ENCODE measurements at regions of chr14 and their contacts with region 1.

Region 1: DNA sequence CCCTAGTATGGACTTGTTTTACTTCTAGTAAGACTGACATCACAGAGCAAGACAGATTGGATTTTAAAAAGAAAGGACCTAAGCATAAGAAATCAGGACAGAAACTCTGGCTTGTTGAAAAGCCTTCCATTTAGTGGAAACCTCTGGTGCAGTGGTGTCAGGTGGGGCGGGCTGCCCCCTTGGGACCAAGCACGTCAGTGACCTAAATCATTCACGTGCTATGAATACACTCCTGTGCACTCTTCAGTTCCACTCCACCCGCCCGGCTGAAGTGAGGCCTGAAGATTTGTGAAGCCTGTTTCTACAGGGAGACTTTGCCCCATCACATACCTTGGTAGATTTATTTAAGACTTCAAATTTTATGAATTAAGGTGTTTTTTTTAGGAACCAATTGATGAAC is 58.2 kb upstream of the STRN3 start:
- DNase-seq: no peak
- ATAC-seq: no peak
- H3K4me3 Mint-ChIP-seq: no peak overlapping the region
- H3K27ac Mint-ChIP-seq: no peak overlapping the region
- H3K4me1 Mint-ChIP-seq: no peaks in the 10 kb centered on the region
- H3K27me3 Mint-ChIP-seq: no peaks in the 10 kb centered on the region

Region 2: GRCh38 chr14:30656190-30656632 is 428.2 kb before region 1 on chr14:
- CTCF ChIA-PET with region 1: no interaction called
- POLR2A ChIA-PET with region 1: no interaction called
- intact Hi-C with region 1: loop called in 1 of 2 experiments (anchors 2 kb)
- DNase-seq: peak; percentile 44
- ATAC-seq: no peak
- H3K4me3 Mint-ChIP-seq: no peak overlapping the region
- H3K27ac Mint-ChIP-seq: no peak overlapping the region
- H3K4me1 Mint-ChIP-seq: no peaks in the 10 kb centered on the region
- H3K27me3 Mint-ChIP-seq: no peaks in the 10 kb centered on the region

Region 3: DNA sequence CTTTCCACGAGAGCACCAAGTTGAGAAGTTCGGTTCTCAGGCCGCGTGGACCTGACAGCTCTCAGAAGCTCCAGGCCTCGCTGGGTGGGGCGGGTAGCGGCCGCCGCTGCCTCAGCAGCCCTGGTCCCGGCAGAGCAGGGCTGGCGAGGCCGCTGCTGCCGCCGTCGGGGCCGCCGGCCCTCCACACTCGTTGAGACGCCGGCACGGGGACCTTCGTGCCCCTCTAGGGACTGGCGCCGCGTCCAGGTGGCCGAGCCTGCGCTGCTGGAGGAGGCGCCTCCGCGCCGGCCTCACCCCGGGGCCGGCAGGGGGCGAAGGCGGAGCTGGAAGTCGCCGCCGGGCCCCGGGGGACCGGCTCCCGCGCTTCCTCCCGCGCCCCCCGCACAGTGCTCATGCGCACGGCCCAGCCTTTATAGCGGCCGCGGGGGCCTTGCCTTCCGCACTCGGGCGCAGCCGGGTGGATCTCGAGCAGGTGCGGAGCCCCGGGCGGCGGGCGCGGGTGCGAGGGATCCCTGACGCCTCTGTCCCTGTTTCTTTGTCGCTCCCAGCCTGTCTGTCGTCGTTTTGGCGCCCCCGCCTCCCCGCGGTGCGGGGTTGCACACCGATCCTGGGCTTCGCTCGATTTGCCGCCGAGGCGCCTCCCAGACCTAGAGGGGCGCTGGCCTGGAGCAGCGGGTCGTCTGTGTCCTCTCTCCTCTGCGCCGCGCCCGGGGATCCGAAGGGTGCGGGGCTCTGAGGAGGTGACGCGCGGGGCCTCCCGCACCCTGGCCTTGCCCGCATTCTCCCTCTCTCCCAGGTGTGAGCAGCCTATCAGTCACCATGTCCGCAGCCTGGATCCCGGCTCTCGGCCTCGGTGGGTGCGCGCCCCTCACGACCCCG is 210.0 kb before region 1 on chr14 and contains the start of gene COCH:
- CTCF ChIA-PET with region 1: interaction called, 4 read pairs
- POLR2A ChIA-PET with region 1: no interaction called
- intact Hi-C with region 1: loop called in 1 of 2 experiments (anchors 1 kb)
- DNase-seq: peak; percentile 51
- ATAC-seq: peak; percentile 70
- H3K4me3 Mint-ChIP-seq: peak within 1 kb of the TSS; percentile 66
- H3K27ac Mint-ChIP-seq: no peak within 1 kb of the TSS
- H3K4me1 Mint-ChIP-seq: peaks cover 11% of the 10 kb centered on the region
- H3K27me3 Mint-ChIP-seq: peaks cover 42% of the 10 kb centered on the region
- total RNA-seq, gene COCH: 0.94 to 1.1 TPM

Region 4: DNA sequence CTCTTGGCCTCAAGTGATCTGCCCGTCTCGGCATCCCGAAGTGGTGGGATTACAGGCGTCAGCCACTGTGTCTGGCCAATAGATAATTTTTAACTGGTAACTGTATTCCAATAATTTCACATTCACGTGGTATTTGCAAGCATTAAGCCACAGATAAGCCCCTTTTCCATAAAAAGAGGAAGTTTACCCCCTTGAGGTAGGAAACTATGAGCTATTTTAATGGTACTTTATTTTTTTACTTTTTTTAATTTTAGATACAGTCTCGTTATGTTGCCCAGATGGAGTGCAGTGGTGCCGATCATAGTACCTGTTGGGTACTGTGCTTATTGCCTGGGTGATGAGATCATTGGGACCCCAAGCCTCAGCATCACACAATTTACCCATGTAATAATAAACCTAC is 101.9 kb before region 1 on chr14:
- CTCF ChIA-PET with region 1: interaction called, 23 read pairs
- POLR2A ChIA-PET with region 1: no interaction called
- intact Hi-C with region 1: loop called (anchors 1 kb)
- DNase-seq: no peak
- ATAC-seq: no peak
- H3K4me3 Mint-ChIP-seq: no peak overlapping the region
- H3K27ac Mint-ChIP-seq: no peak overlapping the region
- H3K4me1 Mint-ChIP-seq: peaks cover 12% of the 10 kb centered on the region
- H3K27me3 Mint-ChIP-seq: no peaks in the 10 kb centered on the region

Region 5: GRCh38 chr14:31026395-31027118 is 57.8 kb before region 1 on chr14:
- CTCF ChIA-PET with region 1: interaction called, 3 read pairs
- POLR2A ChIA-PET with region 1: no interaction called
- intact Hi-C with region 1: loop called (anchors 2 to 5 kb)
- DNase-seq: peak; percentile 95
- ATAC-seq: peak; percentile 91
- H3K4me3 Mint-ChIP-seq: peak overlapping the region; percentile 83
- H3K27ac Mint-ChIP-seq: peak overlapping the region; percentile 90
- H3K4me1 Mint-ChIP-seq: peaks cover 55% of the 10 kb centered on the region
- H3K27me3 Mint-ChIP-seq: no peaks in the 10 kb centered on the region

Region 6: DNA sequence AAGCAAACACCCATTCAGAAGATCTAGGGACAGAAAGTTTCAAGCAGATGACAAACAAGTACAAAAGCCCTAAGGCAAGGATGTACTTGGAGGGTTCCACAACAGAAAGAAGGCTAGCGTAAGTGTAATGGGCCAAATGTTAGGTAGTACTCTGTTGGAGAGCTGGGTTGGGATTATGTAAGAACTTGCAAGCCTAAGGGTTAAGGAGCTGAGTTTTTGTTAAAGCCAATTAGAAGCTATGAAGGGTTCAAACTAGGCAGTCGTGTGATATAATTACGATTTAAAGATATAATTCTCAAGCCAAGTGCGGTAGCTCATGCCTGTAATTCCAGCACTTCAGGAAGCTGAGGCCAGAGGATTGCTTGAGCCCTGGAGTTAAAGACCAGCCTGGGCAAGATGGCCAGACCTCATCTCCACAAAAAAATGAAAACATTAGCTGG is 81.9 kb after region 1 on chr14:
- CTCF ChIA-PET with region 1: no interaction called
- POLR2A ChIA-PET with region 1: no interaction called
- intact Hi-C with region 1: no loop called
- DNase-seq: no peak
- ATAC-seq: no peak
- H3K4me3 Mint-ChIP-seq: no peak overlapping the region
- H3K27ac Mint-ChIP-seq: no peak overlapping the region
- H3K4me1 Mint-ChIP-seq: no peaks in the 10 kb centered on the region
- H3K27me3 Mint-ChIP-seq: no peaks in the 10 kb centered on the region

Region 7: DNA sequence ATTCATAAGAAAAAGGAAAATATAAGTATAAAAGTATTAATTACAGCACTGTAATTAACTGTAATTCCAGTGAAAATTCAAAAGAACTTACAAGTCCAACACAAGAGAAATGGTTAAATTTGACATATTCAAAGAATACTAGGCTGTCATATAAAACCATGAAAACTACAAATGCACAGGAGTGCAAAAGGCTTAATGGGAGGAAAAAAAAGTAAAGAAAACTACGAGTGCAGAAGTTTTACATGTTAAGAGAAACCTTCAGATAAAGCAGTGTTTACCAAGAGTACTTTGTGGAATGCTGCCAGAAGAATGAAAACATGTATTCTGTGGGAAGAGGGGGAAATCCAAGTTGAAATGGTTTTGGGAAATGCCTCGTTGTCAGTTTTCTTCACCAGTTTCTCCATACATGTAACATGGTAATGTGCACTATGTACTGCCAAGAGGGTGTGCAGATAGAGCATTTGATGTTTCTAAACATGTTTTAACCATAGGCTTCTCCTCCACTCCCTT is 326.9 kb after region 1 on chr14:
- CTCF ChIA-PET with region 1: no interaction called
- POLR2A ChIA-PET with region 1: no interaction called
- intact Hi-C with region 1: no loop called
- DNase-seq: no peak
- ATAC-seq: no peak
- H3K4me3 Mint-ChIP-seq: no peak overlapping the region
- H3K27ac Mint-ChIP-seq: no peak overlapping the region
- H3K4me1 Mint-ChIP-seq: peaks cover 11% of the 10 kb centered on the region
- H3K27me3 Mint-ChIP-seq: no peaks in the 10 kb centered on the region